Posterior vena cava (tissue), 2 donors: ENCODE measurements at regions of chr19 and their contacts with region 1.

Region 1: DNA sequence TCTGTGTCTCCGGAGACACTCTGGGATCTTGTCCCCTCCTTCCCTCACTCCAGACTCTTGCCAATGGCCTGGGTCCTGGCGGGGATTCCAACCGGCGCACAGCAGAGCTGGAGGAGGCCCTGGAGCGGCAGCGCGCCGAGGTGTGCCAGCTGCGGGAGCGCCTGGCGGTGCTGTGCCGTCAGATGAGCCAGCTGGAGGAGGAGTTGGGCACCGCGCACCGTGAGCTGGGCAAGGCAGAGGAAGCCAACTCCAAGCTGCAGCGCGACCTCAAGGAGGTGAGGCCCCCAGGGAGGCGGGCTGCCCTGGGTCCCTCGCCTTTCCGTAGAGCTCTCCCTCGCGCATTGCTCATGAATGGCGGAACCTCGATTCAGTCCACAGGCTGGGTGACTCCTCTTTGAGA is 11.0 kb downstream of the PPFIA3 start:
- DNase-seq: no peak

Region 2: DNA sequence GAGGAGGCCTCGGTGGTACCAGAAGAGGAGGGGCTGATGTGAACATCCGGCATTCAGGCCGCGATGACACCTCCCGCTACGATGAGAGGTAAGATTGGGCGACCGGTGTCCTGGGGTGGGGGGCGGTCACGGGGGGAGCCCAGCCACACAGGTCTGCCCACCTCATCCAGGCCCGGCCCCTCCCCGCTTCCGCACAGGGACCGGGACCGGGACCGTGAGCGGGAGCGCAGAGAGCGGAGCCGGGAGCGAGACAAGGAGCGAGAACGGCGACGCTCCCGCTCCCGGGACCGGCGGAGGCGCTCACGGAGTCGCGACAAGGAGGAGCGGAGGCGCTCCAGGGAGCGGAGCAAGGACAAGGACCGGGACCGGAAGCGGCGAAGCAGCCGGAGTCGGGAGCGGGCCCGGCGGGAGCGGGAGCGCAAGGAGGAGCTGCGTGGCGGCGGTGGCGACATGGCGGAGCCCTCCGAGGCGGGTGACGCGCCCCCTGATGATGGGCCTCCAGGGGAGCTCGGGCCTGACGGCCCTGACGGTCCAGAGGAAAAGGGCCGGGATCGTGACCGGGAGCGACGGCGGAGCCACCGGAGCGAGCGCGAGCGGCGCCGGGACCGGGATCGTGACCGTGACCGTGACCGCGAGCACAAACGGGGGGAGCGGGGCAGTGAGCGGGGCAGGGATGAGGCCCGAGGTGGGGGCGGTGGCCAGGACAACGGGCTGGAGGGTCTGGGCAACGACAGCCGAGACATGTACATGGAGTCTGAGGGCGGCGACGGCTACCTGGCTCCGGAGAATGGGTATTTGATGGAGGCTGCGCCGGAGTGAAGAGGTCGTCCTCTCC is 22.5 kb before region 1 on chr19:
- intact Hi-C with region 1: loop called in 1 of 2 experiments (anchors 2 kb)
- DNase-seq: no peak